Activated naive CD8-positive, alpha-beta T cell treated with anti-CD3 and anti-CD28 coated beads, Interleukin-2, amount 10 ng/mL, durations not matched to agents 7 days and 5 days (primary cell): ENCODE measurements at regions of chr19 and their contacts with region 1.

Region 1: DNA sequence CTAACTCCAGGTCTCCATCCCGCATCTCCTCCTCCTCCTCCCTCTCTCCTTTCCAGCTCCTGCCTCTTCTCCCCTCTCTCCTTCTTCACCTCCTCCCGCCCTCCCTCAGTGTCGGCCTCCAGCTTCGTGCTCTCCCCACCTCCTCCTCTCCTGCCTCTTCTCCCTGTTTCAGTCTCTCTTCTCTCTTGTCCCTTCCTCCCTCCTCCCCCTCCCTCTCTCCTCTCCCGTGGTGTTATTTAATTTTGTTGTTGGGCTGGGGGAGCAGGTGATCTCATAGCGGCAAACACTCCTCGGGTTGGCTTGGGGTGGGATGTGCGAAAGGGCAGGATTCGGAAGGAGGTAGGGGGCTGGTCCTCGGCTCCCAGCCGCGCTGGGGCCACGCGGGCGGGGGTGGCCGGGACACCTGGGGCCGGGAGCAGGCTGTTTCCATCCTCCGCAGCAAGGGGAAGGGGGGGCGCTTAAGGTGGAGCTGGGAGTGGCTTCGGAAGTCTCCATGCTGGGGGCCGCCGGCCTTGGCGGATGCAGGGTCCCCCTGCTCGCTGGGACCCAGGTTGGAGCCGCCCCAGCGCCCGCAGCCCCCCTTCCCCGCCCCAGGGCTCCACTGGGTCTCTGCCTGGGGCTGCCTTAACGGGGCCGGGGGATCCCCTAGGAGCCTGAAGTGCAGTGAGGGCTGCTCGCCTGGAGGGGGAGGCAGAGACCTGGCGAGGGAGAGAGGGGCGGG is at the start of gene CA11:
- DNase-seq: peak; percentile 94
- ATAC-seq: peak; percentile 80
- H3K4me3 Mint-ChIP-seq: peak within 1 kb of the TSS; percentile 93
- H3K27ac Mint-ChIP-seq: peak within 1 kb of the TSS; percentile 84
- H3K4me1 Mint-ChIP-seq: peaks cover 37% of the 10 kb centered on the region
- H3K27me3 Mint-ChIP-seq: no peaks in the 10 kb centered on the region
- total RNA-seq, gene CA11: 9.7 to 10.4 TPM

Region 2: GRCh38 chr19:48674921-48675824 is 29.0 kb after region 1 on chr19:
- POLR2A ChIA-PET with region 1: interaction called, 10 read pairs
- DNase-seq: peak; percentile 62
- ATAC-seq: peak; percentile 82
- H3K4me3 Mint-ChIP-seq: no peak overlapping the region
- H3K27ac Mint-ChIP-seq: no peak overlapping the region
- H3K4me1 Mint-ChIP-seq: peaks cover 6% of the 10 kb centered on the region
- H3K27me3 Mint-ChIP-seq: peaks cover 3% of the 10 kb centered on the region

Region 3: DNA sequence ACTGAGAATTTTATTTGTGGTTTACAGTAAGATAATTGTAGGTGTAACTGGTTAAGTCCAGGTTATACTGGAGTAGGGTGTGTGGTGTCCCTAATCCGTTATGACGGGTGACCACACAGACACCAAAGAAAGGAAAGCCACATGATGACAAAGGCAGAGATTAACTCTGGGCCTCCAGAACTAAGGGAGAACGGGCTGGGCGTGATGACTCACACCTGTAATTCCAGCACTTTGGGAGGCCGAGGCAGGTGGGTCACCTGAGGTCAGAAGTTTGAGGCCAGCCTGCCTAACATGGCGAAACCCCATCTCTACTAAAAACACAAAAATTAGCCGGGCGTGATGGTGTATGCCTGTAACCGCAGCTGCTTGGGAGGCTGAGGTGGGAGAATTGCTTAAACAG is 39.4 kb after region 1 on chr19:
- POLR2A ChIA-PET with region 1: no interaction called
- DNase-seq: no peak
- ATAC-seq: no peak
- H3K4me3 Mint-ChIP-seq: no peak overlapping the region
- H3K27ac Mint-ChIP-seq: no peak overlapping the region
- H3K4me1 Mint-ChIP-seq: no peaks in the 10 kb centered on the region
- H3K27me3 Mint-ChIP-seq: peaks cover 1% of the 10 kb centered on the region

Region 4: GRCh38 chr19:48760504-48761205 is 114.5 kb after region 1 on chr19:
- POLR2A ChIA-PET with region 1: no interaction called
- DNase-seq: no peak
- ATAC-seq: peak; percentile 22
- H3K4me3 Mint-ChIP-seq: peak overlapping the region; percentile 37
- H3K27ac Mint-ChIP-seq: peak overlapping the region; percentile 56
- H3K4me1 Mint-ChIP-seq: peaks cover 8% of the 10 kb centered on the region
- H3K27me3 Mint-ChIP-seq: peaks cover 8% of the 10 kb centered on the region